Activated B cell treated with CpG ODN at 0.5 μM for 24 hours (primary cell): ENCODE measurements at regions of chr9 and their contacts with region 1.

Region 1: DNA sequence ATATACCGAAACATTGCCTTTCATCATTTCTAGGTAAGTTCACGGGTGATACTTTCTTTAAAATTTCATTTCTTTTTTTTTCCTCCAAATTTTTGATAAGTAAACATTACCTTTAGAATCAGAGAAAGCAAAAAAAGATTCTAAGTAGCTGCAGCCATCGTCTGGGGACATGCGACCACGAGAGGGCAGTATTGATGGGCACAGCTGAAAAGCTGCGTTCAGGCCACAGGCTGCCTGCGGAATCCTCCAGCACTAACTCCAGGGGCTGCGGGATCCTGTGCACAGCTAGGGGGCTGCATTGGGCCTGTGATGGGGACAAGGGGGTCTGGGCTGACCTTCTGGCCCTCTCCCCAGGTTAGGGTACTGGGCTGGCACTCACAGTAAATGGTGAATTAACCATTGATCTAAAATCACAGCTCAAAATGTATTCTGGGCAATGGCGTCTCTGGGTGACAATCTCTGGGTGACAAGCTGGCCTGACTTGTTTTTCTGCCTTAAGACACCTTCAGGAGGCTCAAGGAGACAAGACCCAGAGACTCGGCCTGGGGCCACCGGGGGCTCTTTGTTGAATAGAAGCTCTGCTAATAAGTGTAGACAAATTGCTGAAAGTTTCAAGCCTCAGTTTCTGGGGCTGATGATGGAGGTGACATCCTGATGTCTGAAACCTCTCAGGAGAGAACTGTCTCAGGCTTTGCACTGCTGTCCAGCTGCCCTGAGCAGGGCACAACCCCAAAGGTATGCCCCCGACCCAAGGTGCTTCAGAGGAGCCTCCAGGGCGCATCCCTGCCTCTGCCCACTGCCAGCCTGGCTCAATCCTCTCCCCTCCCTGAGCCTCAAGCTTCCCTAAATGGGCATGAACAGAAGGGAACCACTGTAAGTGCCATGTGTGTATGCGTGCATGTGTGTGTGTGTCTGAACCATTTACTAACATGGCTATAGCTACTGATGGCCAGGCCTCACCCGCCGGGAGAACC is 44.3 kb upstream of the SARDH start:
- DNase-seq: peak; percentile 60
- ATAC-seq: peak; percentile 35
- H3K4me3 Mint-ChIP-seq: peak overlapping the region; percentile 20
- H3K27ac Mint-ChIP-seq: peak overlapping the region; percentile 6
- H3K4me1 Mint-ChIP-seq: peaks cover 60% of the 10 kb centered on the region
- H3K27me3 Mint-ChIP-seq: no peaks in the 10 kb centered on the region
- CTCF ChIP-seq: peak; percentile 55

Region 2: DNA sequence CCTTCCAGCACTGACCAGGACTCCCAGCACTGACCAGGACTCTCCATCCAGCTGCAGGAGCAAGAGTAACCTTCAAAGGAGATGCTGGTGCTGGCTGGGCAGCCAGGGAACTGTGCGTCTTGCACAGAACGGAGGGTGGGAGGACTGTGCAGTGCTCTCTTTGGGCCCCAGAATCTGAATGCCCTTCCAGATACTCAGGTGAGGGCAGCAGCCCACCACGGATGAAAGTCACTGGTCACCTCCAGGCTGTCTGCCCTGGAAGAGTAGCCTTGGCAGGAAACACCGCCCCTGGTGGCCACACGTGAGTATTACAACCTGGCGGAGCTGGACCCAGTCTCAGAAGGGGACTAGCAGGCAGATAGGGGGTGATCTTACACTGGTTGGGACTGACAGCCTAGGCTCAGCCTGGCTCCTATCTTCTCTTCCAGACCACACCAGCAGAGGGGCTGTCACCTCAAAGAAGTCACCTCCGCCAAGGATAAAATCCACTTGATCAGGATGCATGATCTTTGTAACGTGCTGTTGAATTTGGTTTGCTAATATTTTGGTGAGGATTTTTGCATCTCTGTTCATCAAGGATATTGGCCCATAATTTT is 39.5 kb before region 1 on chr9:
- CTCF ChIA-PET with region 1: interaction called, 8 read pairs
- POLR2A ChIA-PET with region 1: no interaction called
- intact Hi-C with region 1: loop called (anchors 2 kb)
- DNase-seq: peak; percentile 77
- ATAC-seq: peak; percentile 84
- H3K4me3 Mint-ChIP-seq: no peak overlapping the region
- H3K27ac Mint-ChIP-seq: no peak overlapping the region
- H3K4me1 Mint-ChIP-seq: peaks cover 9% of the 10 kb centered on the region
- H3K27me3 Mint-ChIP-seq: peaks cover 19% of the 10 kb centered on the region
- CTCF ChIP-seq: peak; percentile 98

Region 3: GRCh38 chr9:133792721-133793470 is 10.5 kb after region 1 on chr9:
- CTCF ChIA-PET with region 1: interaction called, 26 read pairs
- POLR2A ChIA-PET with region 1: interaction called, 5 read pairs
- intact Hi-C with region 1: loop called (anchors 1 kb)
- DNase-seq: peak; percentile 70
- ATAC-seq: peak; percentile 88
- H3K4me3 Mint-ChIP-seq: peak overlapping the region; percentile 57
- H3K27ac Mint-ChIP-seq: peak overlapping the region; percentile 66
- H3K4me1 Mint-ChIP-seq: peaks cover 74% of the 10 kb centered on the region
- H3K27me3 Mint-ChIP-seq: no peaks in the 10 kb centered on the region
- CTCF ChIP-seq: peak; percentile 30

Region 4: GRCh38 chr9:133855802-133856521 is 73.5 kb after region 1 on chr9:
- CTCF ChIA-PET with region 1: no interaction called
- POLR2A ChIA-PET with region 1: no interaction called
- intact Hi-C with region 1: no loop called
- DNase-seq: no peak
- ATAC-seq: no peak
- H3K4me3 Mint-ChIP-seq: no peak overlapping the region
- H3K27ac Mint-ChIP-seq: no peak overlapping the region
- H3K4me1 Mint-ChIP-seq: peaks cover 23% of the 10 kb centered on the region
- H3K27me3 Mint-ChIP-seq: no peaks in the 10 kb centered on the region
- CTCF ChIP-seq: no peak

Region 5: GRCh38 chr9:133955821-133956411 is 173.5 kb after region 1 on chr9:
- CTCF ChIA-PET with region 1: interaction called, 11 read pairs
- POLR2A ChIA-PET with region 1: interaction called, 3 read pairs
- intact Hi-C with region 1: no loop called
- DNase-seq: no peak
- ATAC-seq: peak; percentile 68
- H3K4me3 Mint-ChIP-seq: peak overlapping the region; percentile 86
- H3K27ac Mint-ChIP-seq: peak overlapping the region; percentile 96
- H3K4me1 Mint-ChIP-seq: peaks cover 71% of the 10 kb centered on the region
- H3K27me3 Mint-ChIP-seq: no peaks in the 10 kb centered on the region
- CTCF ChIP-seq: no peak

Region 6: GRCh38 chr9:134163353-134164196 is 381.1 kb after region 1 on chr9:
- CTCF ChIA-PET with region 1: no interaction called
- POLR2A ChIA-PET with region 1: no interaction called
- intact Hi-C with region 1: loop called (anchors 2 kb)
- DNase-seq: peak; percentile 64
- ATAC-seq: peak; percentile 18
- H3K4me3 Mint-ChIP-seq: no peak overlapping the region
- H3K27ac Mint-ChIP-seq: no peak overlapping the region
- H3K4me1 Mint-ChIP-seq: peaks cover 9% of the 10 kb centered on the region
- H3K27me3 Mint-ChIP-seq: no peaks in the 10 kb centered on the region
- CTCF ChIP-seq: no peak